ENCODE measurements at regions of chr5 and their contacts with region 1.

Region 1: GRCh38 chr5:77785229-77785628 is 9.1 kb upstream of the TBCA start:
- DNase-seq: no peak

Region 2: GRCh38 chr5:77239126-77239741 is 546.0 kb before region 1 on chr5:
- intact Hi-C with region 1: loop called in 1 of 2 experiments (anchors 10 kb)
- DNase-seq: no peak

Region 3: DNA sequence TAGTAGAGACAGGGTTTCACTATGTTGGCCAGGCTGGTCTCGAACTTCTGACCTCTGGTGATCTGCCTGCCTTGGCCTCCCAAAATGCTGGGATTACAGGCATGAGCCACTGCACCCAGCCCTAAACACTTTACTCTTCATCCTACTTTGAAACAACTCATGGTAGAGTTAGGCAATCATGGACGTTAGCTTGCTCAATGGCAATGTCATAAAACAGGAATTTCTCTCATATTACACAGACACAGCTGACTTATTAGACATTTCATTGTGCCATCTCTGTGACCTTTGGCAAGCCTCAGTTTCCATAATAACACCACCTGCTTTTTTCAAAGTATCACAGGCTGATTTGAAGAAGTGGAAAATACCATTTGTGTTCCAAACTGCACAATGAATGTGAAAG is 105.4 kb before region 1 on chr5:
- intact Hi-C with region 1: no loop called
- DNase-seq: no peak

Measured in posterior vena cava (tissue), 2 donors.